PC-9 (cell line): ENCODE measurements at regions of chr13 and their contacts with region 1.

Region 1: GRCh38 chr13:89968470-89968869 is 1379.0 kb upstream of the MIR17HG start:
- DNase-seq: no peak
- H3K4me3 ChIP-seq: no peak overlapping the region
- H3K27ac ChIP-seq: no peak overlapping the region
- H3K4me1 ChIP-seq: no peaks in the 10 kb centered on the region
- H3K27me3 ChIP-seq: no peaks in the 10 kb centered on the region
- CTCF ChIP-seq: no peak

Region 2: GRCh38 chr13:89846926-89847585 is 121.4 kb before region 1 on chr13:
- CTCF ChIA-PET with region 1: no interaction called
- POLR2A ChIA-PET with region 1: no interaction called
- intact Hi-C with region 1: no loop called
- DNase-seq: no peak
- H3K4me3 ChIP-seq: no peak overlapping the region
- H3K27ac ChIP-seq: no peak overlapping the region
- H3K4me1 ChIP-seq: no peaks in the 10 kb centered on the region
- H3K27me3 ChIP-seq: no peaks in the 10 kb centered on the region
- CTCF ChIP-seq: no peak

Region 3: DNA sequence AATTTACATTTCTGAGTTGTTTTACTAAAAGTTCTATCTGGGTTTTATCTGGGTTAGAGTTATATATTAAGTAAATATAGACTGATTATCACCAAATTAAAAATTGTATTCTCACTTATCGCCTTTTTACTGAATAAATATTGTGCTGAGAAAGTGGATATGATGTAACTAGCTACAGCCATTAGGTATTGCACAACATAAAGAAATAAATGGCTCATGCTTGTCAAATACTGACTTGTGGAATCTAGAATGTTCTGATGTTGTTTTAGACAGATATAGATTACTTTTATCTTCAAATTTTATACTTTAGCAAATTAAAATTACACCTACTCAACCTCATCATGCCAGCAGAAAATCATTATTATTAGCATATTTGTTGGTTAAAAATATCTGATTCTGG is 101.9 kb after region 1 on chr13:
- CTCF ChIA-PET with region 1: no interaction called
- POLR2A ChIA-PET with region 1: no interaction called
- intact Hi-C with region 1: loop called (anchors 10 kb)
- DNase-seq: no peak
- H3K4me3 ChIP-seq: no peak overlapping the region
- H3K27ac ChIP-seq: no peak overlapping the region
- H3K4me1 ChIP-seq: no peaks in the 10 kb centered on the region
- H3K27me3 ChIP-seq: no peaks in the 10 kb centered on the region
- CTCF ChIP-seq: no peak